ENCODE measurements at regions of chr3 and their contacts with region 1.

Region 1: DNA sequence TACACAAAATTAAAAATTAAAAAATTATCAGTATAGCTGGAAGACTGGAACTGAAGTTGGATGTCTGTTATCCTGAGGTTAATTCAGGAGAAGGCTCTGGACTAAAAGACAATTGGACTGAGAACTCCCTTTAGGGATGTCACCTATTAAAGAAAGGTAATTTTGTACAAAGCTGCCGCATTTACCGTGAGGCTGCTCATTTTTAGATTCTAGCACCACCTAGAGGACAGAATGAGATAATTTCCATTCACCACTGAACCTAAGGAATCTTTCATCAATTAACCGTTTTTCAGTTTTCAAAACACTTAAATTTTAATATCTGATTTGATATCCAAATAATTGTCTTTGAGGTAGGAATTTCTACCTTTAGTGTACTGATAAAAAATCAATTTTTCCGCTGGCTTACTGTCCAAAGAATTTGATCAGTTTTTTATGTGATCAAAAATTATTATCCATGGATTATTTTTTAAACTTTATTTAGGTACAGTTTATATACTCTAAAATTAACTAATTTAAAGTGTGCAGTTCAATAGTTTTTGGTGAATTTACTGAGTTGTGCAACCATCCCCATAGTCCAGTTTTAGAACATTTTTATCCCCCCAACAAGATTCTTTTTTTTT is 106.7 kb upstream of the TNIK start:
- DNase-seq: no peak
- ATAC-seq: peak; percentile 31
- H3K4me3 Mint-ChIP-seq: no peak overlapping the region
- H3K27ac Mint-ChIP-seq: no peak overlapping the region
- H3K4me1 Mint-ChIP-seq: no peaks in the 10 kb centered on the region
- H3K27me3 Mint-ChIP-seq: peaks cover 3% of the 10 kb centered on the region
- CTCF ChIP-seq: peak; percentile 77

Region 2: DNA sequence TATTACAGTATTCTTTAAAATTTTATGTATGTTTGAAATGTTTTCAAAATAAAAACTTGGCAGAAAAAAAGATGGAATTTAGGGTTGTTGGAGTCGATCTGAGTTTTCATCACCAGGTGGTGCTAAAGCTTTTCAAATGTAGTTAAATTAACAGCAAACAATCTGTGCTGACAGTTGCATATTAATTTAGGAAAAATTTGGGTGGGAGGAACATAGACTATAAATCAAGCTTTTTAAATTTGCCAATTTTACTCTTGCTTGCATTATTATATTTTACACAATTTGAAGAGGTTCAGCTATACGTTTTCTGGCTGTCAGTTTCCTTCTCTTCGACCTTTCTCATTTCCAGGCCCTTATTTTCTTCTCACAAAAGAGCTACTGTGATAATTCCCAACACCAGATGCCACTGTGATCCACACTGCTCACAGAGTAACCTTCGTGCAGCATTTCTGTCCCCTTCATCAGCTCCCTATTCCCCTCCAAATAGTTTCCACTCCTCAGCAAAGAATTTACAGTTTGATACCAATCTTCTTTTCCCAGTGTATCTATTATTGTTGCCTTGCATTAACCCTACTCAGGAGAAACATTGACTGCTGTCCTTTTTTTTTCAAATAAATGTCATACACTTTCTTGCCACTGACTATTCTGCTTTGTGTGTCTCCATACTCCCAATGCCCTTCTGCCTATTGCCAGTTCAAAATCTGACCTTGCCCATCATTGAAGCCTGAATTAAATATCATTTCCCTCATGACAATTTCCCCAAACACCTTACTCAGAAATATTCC is 605.1 kb before region 1 on chr3:
- CTCF ChIA-PET with region 1: interaction called, 18 read pairs
- POLR2A ChIA-PET with region 1: no interaction called
- intact Hi-C with region 1: loop called (anchors 1 kb)
- DNase-seq: no peak
- ATAC-seq: no peak
- H3K4me3 Mint-ChIP-seq: no peak overlapping the region
- H3K27ac Mint-ChIP-seq: no peak overlapping the region
- H3K4me1 Mint-ChIP-seq: no peaks in the 10 kb centered on the region
- H3K27me3 Mint-ChIP-seq: peaks cover 4% of the 10 kb centered on the region
- CTCF ChIP-seq: no peak

Region 3: GRCh38 chr3:171049861-171050444 is 517.0 kb before region 1 on chr3:
- CTCF ChIA-PET with region 1: interaction called, 40 read pairs
- POLR2A ChIA-PET with region 1: no interaction called
- intact Hi-C with region 1: loop called (anchors 1 kb)
- DNase-seq: no peak
- ATAC-seq: peak; percentile 42
- H3K4me3 Mint-ChIP-seq: no peak overlapping the region
- H3K27ac Mint-ChIP-seq: no peak overlapping the region
- H3K4me1 Mint-ChIP-seq: no peaks in the 10 kb centered on the region
- H3K27me3 Mint-ChIP-seq: no peaks in the 10 kb centered on the region
- CTCF ChIP-seq: no peak

Region 4: DNA sequence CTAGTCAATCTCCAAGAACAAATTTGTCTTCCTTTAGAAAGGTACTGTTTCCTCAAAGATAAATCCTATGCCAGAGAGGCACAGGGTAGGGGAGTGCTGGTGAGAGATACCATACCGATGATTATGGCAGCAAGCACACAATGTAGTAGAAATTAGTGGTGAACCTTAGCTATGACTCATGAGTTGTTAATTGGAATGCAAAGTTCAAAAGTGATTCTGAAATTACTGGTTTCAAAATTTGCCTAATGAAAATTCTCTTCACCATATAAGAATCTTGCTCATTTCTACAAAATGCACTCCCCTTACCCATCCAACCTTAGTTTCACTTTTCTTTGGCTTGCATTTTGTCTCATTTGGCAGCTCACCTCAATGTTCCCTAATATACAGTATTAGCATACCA is 400.9 kb before region 1 on chr3:
- CTCF ChIA-PET with region 1: interaction called, 8 read pairs
- POLR2A ChIA-PET with region 1: no interaction called
- intact Hi-C with region 1: loop called (anchors 1 kb)
- DNase-seq: no peak
- ATAC-seq: no peak
- H3K4me3 Mint-ChIP-seq: no peak overlapping the region
- H3K27ac Mint-ChIP-seq: no peak overlapping the region
- H3K4me1 Mint-ChIP-seq: peaks cover 4% of the 10 kb centered on the region
- H3K27me3 Mint-ChIP-seq: no peaks in the 10 kb centered on the region
- CTCF ChIP-seq: no peak

Region 5: DNA sequence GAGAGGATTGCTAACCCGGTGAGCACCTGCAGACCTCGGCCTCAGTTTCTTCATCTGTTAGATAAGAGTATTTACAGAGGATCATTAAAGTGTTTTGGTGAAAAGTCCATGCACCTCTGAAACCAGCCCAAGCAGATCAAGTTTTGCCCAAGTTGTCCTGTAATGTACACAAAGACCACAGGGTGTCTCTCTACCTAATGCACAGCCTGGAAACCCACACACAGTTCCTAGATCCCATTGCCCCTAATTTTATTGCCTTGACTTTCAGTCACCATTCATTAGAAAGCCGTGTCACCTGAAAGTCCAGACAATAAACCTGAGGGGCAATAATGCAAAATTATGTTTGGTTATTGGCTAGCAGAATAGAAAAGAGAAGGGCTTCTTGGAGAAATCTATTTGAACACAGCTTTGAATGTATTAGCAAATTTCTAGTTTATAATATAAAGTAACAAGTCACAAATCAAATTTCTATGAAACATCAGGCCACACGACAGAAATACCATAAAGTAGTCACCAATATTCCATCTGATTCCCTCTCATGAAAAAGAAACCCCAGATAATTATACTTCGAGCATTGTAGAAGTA is 379.1 kb before region 1 on chr3:
- CTCF ChIA-PET with region 1: interaction called, 44 read pairs
- POLR2A ChIA-PET with region 1: no interaction called
- intact Hi-C with region 1: loop called (anchors 1 kb)
- DNase-seq: no peak
- ATAC-seq: no peak
- H3K4me3 Mint-ChIP-seq: no peak overlapping the region
- H3K27ac Mint-ChIP-seq: no peak overlapping the region
- H3K4me1 Mint-ChIP-seq: no peaks in the 10 kb centered on the region
- H3K27me3 Mint-ChIP-seq: no peaks in the 10 kb centered on the region
- CTCF ChIP-seq: no peak

Region 6: GRCh38 chr3:171269542-171269941 is 297.4 kb before region 1 on chr3:
- CTCF ChIA-PET with region 1: no interaction called
- POLR2A ChIA-PET with region 1: no interaction called
- intact Hi-C with region 1: no loop called
- DNase-seq: no peak
- ATAC-seq: no peak
- H3K4me3 Mint-ChIP-seq: no peak overlapping the region
- H3K27ac Mint-ChIP-seq: no peak overlapping the region
- H3K4me1 Mint-ChIP-seq: no peaks in the 10 kb centered on the region
- H3K27me3 Mint-ChIP-seq: no peaks in the 10 kb centered on the region
- CTCF ChIP-seq: no peak

Region 7: DNA sequence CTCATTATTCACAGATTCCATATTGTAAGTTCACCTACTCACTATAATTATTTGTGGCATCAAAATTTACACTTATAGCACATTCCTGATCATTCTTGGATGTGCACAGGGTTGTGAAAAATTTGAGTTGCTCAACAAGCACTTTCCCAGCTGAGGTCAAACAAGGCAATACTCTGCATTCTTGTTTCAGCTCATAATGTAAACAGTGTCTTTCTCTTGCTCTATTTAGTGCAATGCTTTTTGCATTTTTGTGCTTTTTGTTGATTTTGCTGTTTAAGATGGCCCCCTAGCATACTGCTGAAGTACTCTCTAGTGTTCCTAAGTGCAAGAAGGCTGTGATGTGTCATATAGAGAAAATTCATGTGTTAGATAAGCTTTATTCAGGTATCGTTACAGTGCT is 40.0 kb before region 1 on chr3:
- CTCF ChIA-PET with region 1: no interaction called
- POLR2A ChIA-PET with region 1: no interaction called
- intact Hi-C with region 1: no loop called
- DNase-seq: no peak
- ATAC-seq: no peak
- H3K4me3 Mint-ChIP-seq: no peak overlapping the region
- H3K27ac Mint-ChIP-seq: no peak overlapping the region
- H3K4me1 Mint-ChIP-seq: no peaks in the 10 kb centered on the region
- H3K27me3 Mint-ChIP-seq: no peaks in the 10 kb centered on the region
- CTCF ChIP-seq: no peak

Measured in activated B cell treated with CpG ODN at 0.5 μM for 24 hours (primary cell).